HepG2 (cell line): ENCODE measurements at regions of chr2 and their contacts with region 1.

Region 1: DNA sequence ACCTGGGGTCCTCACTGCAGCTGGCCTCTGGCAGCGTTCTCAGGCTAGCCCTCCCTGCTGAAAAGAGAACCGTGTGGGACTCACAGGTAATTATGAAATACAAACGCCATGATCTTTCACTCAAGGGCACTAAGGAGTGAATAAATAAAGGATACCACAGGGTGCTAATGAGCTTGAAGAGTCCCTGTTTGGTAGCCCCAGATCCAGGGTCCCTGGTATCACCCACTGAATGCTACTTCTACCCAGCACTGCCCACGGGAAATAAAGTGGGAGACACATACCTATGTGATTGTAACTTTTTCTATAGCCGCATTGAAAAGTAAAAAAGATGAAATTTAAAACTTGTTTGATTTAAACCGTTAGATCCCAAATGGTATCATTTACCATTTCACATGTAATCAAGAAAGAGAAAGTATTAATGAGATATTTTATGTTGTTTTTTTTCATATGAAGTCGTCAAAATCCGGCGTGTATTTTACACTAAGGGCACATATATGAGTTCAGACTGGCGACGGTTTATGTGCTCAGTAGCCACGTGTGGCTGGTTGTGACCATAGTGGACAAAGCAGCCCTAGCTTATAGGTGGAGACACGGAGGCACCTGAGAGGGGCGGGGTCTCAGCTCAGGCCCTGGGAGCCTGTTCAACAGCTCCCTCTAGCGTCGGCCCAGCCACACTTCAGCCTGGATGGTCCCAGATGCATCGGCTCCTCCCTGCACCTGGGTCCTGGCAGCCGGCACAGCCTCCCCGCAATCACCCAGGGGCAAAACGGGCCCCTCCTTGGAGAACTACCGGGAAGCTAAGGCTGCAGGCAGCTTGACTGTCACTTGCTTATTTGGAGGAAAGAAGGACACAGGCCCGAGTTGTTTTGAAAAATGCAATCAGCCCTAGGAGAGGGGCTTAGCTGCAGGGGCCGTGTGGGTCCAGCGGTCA is 39.2 kb downstream of the ODC1 start:
- DNase-seq: peak; percentile 87
- ATAC-seq: peak; percentile 89
- H3K4me3 ChIP-seq: peak overlapping the region in 1 of 3 experiments; percentile 27; a peak in 1 of 6 replicates
- H3K27ac ChIP-seq: peak overlapping the region; percentile 56
- H3K4me1 ChIP-seq: peaks cover 28% of the 10 kb centered on the region
- H3K27me3 ChIP-seq: no peaks in the 10 kb centered on the region
- CTCF ChIP-seq: peak; percentile 100
- EP300 ChIP-seq: no peak; a peak in 1 of 4 replicates
- POLR2A ChIP-seq: no peak
- RAD21 ChIP-seq: peak; percentile 100

Region 2: DNA sequence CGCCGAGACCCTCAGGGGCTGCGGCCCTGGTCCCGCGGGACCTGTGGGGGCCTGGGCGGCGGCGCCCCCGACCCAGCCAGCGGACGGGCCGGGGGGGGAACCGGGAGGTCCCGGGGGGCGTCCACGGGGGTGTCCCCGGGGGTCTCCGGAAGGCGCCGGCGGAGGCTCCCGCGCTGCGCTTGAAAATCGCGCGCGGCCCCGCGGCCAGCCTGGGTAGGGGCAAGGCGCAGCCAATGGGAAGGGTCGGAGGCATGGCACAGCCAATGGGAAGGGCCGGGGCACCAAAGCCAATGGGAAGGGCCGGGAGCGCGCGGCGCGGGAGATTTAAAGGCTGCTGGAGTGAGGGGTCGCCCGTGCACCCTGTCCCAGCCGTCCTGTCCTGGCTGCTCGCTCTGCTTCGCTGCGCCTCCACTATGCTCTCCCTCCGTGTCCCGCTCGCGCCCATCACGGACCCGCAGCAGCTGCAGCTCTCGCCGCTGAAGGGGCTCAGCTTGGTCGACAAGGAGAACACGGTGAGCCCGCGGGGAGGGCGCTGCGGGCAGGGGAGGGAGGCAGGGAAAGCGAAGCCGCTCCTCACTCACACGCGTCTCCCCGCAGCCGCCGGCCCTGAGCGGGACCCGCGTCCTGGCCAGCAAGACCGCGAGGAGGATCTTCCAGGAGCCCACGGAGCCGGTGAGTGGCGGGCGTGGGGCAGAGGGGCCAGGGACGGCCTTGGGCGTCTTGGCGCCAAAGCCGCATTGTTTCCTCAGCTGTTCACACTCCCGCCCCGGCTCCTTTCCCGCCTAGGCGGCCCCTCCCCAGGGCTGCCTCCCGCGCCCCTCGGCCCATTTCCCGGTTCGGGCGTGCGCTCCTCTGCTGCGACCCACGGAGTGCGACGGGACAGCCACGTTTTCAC is 286.3 kb before region 1 on chr2 and contains the start of gene RRM2:
- CTCF ChIA-PET with region 1: interaction called, 10 read pairs
- POLR2A ChIA-PET with region 1: interaction called, 5 read pairs
- in situ Hi-C with region 1: no loop called
- intact Hi-C with region 1: loop called (anchors 10 kb)
- DNase-seq: peak; percentile 95
- ATAC-seq: peak; percentile 86
- H3K4me3 ChIP-seq: peak within 1 kb of the TSS; percentile 70 to 99 (median 93)
- H3K27ac ChIP-seq: peak within 1 kb of the TSS; percentile 92
- H3K4me1 ChIP-seq: peaks cover 81% of the 10 kb centered on the region
- H3K27me3 ChIP-seq: no peaks in the 10 kb centered on the region
- CTCF ChIP-seq: peak; percentile 35
- EP300 ChIP-seq: 0 out of 4 replicates have a peak, but pooled peaks of 1 of the 2 experiments have one; percentile 40
- POLR2A ChIP-seq: peak; percentile 99 to 100
- RAD21 ChIP-seq: peak; percentile 49; the same call in 1 of the 2 replicates
- total RNA-seq, gene RRM2: 150 and 191 TPM in 2 replicates

Region 3: GRCh38 chr2:10188216-10188615 is 220.7 kb before region 1 on chr2:
- CTCF ChIA-PET with region 1: interaction called, 7 read pairs
- POLR2A ChIA-PET with region 1: no interaction called
- in situ Hi-C with region 1: no loop called
- intact Hi-C with region 1: loop called (anchors 1 kb)
- DNase-seq: peak; percentile 78
- ATAC-seq: peak; percentile 89
- H3K4me3 ChIP-seq: no peak overlapping the region
- H3K27ac ChIP-seq: no peak overlapping the region
- H3K4me1 ChIP-seq: no peaks in the 10 kb centered on the region
- H3K27me3 ChIP-seq: no peaks in the 10 kb centered on the region
- CTCF ChIP-seq: peak; percentile 64
- EP300 ChIP-seq: no peak
- POLR2A ChIP-seq: no peak
- RAD21 ChIP-seq: peak; percentile 83

Region 4: DNA sequence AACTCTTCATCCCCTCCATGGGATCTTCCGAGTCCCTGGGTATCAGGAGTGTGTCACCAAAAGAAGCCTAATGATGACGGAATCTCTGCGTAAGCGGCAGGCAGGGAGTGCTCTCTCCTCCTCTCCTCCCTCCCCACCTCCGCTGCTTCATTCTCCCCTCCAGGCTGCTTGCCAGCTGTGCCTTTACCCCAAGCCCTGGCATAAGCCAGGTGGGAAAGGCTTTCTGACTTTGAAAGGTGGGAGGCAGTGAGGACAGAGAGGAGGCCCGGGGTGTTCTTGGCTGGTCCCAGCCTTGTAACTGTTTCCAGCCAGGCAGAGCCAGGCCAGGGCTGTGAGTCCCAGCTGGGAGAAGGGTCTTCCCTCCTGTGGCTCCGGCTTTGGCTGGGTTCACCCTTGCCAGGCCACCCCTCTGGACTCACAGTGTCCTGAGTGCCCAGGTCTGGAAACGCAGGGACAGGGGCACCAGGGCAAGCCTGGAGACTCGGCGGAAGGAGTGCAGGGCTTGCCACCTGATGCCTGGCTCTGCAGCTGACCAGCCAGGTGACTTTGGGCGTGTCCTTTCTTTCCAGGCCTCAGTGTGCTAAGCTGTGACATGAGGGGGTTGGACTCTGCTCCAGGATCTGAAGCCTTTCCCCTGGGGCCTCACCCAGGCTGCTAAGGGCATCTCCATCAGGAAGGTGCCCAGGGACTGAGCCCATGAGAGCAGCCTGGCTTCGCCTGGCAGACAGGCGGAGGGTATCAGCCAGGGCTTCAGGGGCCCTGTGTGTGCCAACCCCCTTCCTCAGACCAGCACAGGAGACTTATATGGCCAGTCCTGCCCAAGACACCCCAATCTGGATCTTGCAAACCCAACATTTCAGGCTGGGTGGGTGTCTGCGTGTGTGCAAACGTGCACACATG is 139.0 kb before region 1 on chr2:
- CTCF ChIA-PET with region 1: interaction called, 17 read pairs
- POLR2A ChIA-PET with region 1: interaction called, 3 read pairs
- in situ Hi-C with region 1: loop called (anchors 5 kb)
- intact Hi-C with region 1: loop called (anchors 1 kb)
- DNase-seq: no peak
- ATAC-seq: peak; percentile 12
- H3K4me3 ChIP-seq: peak overlapping the region in 1 of 3 experiments; percentile 50; a peak in 1 of 6 replicates
- H3K27ac ChIP-seq: no peak overlapping the region
- H3K4me1 ChIP-seq: peaks cover 63% of the 10 kb centered on the region
- H3K27me3 ChIP-seq: peaks cover 12 to 52% of the 10 kb centered on the region in 2 experiments
- CTCF ChIP-seq: no peak
- EP300 ChIP-seq: no peak
- POLR2A ChIP-seq: no peak
- RAD21 ChIP-seq: no peak

Region 5: GRCh38 chr2:10278029-10278762 is 130.7 kb before region 1 on chr2:
- CTCF ChIA-PET with region 1: no interaction called
- POLR2A ChIA-PET with region 1: interaction called, 6 read pairs
- in situ Hi-C with region 1: loop called (anchors 5 kb)
- intact Hi-C with region 1: loop called (anchors 2 kb)
- DNase-seq: peak; percentile 87
- ATAC-seq: peak; percentile 69
- H3K4me3 ChIP-seq: peak overlapping the region; percentile 27 to 78 (median 52)
- H3K27ac ChIP-seq: peak overlapping the region; percentile 69
- H3K4me1 ChIP-seq: peaks cover 47% of the 10 kb centered on the region
- H3K27me3 ChIP-seq: peaks cover 3 to 18% of the 10 kb centered on the region in 2 experiments; a peak in 4 of 5 replicates
- CTCF ChIP-seq: peak; percentile 4
- EP300 ChIP-seq: peak in 1 of 2 experiments; percentile 52; a peak in 2 of 4 replicates
- POLR2A ChIP-seq: peak in 1 of 2 experiments; percentile 43; a peak in 1 of 4 replicates
- RAD21 ChIP-seq: no peak

Region 6: GRCh38 chr2:10292033-10292432 is 116.9 kb before region 1 on chr2:
- CTCF ChIA-PET with region 1: no interaction called
- POLR2A ChIA-PET with region 1: no interaction called
- in situ Hi-C with region 1: no loop called
- intact Hi-C with region 1: no loop called
- DNase-seq: no peak
- ATAC-seq: no peak
- H3K4me3 ChIP-seq: no peak overlapping the region
- H3K27ac ChIP-seq: no peak overlapping the region
- H3K4me1 ChIP-seq: peaks cover 3% of the 10 kb centered on the region
- H3K27me3 ChIP-seq: no peaks in the 10 kb centered on the region
- CTCF ChIP-seq: no peak
- EP300 ChIP-seq: no peak
- POLR2A ChIP-seq: no peak
- RAD21 ChIP-seq: no peak

Region 7: DNA sequence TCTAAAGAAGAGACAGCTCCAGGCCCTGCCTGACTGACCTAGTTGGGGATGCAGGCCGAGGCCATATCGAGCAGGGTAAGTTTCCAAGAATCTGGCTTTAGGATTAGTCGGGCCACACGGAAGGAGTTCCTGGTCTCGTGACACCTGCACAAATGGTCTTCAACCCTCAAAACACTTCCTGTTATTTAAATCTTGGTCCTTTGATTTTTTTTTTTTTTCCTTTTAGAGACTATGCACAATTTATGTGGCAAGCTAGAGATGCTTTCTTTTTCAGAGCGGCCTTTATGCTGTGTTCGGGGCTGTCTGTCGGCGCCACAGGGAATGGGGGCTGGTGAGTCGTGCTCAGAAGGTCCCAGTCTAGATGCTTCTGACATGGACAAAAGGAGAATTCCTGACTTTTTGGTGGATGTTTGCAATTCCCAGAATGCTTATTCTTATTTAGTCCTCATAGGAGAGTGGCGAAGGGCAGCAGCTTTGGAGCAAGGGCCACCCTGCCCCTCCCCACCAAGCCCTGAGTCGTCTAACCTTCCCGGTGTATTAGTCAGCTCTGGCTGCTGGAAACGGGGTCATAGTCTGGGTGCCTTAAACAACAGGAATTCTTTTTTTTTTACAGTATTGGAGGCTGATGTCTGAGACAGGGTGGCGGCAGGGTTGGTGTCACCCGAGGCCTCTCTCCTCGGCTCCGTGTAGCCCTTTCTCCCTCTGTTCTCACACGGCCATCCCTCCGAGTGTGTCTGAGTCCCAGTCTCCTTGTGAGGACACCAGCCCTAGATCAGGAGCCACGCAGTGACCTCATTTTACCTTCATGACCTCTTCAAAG is 78.8 kb before region 1 on chr2:
- CTCF ChIA-PET with region 1: interaction called, 3 read pairs
- POLR2A ChIA-PET with region 1: interaction called, 11 read pairs
- in situ Hi-C with region 1: loop called (anchors 5 kb)
- intact Hi-C with region 1: loop called (anchors 2 kb)
- DNase-seq: peak; percentile 78
- ATAC-seq: peak; percentile 65
- H3K4me3 ChIP-seq: peak overlapping the region; percentile 47 to 67 (median 54)
- H3K27ac ChIP-seq: peak overlapping the region; percentile 60
- H3K4me1 ChIP-seq: peaks cover 84% of the 10 kb centered on the region
- H3K27me3 ChIP-seq: no peaks in the 10 kb centered on the region; a peak in 1 of 5 replicates
- CTCF ChIP-seq: no peak
- EP300 ChIP-seq: peak; percentile 10 to 57; a peak in 1 of 4 replicates
- POLR2A ChIP-seq: peak in 1 of 2 experiments; percentile 35; a peak in 1 of 4 replicates
- RAD21 ChIP-seq: no peak

Region 8: GRCh38 chr2:10369269-10370255 is 39.4 kb before region 1 on chr2:
- CTCF ChIA-PET with region 1: no interaction called
- POLR2A ChIA-PET with region 1: interaction called, 24 read pairs
- in situ Hi-C with region 1: loop called (anchors 5 kb)
- intact Hi-C with region 1: loop called (anchors 1 kb)
- DNase-seq: peak; percentile 83
- ATAC-seq: peak; percentile 76
- H3K4me3 ChIP-seq: peak overlapping the region; percentile 27 to 69 (median 41); a peak in 5 of 6 replicates
- H3K27ac ChIP-seq: peak overlapping the region; percentile 49
- H3K4me1 ChIP-seq: peaks cover 66% of the 10 kb centered on the region
- H3K27me3 ChIP-seq: no peaks in the 10 kb centered on the region
- CTCF ChIP-seq: peak; percentile 45
- EP300 ChIP-seq: peak in 1 of 2 experiments; percentile 24; a peak in 1 of 4 replicates
- POLR2A ChIP-seq: no peak
- RAD21 ChIP-seq: peak; percentile 34